Heart left ventricle (tissue), 16 donors: ENCODE measurements at regions of chr6 and their contacts with region 1.

Region 1: DNA sequence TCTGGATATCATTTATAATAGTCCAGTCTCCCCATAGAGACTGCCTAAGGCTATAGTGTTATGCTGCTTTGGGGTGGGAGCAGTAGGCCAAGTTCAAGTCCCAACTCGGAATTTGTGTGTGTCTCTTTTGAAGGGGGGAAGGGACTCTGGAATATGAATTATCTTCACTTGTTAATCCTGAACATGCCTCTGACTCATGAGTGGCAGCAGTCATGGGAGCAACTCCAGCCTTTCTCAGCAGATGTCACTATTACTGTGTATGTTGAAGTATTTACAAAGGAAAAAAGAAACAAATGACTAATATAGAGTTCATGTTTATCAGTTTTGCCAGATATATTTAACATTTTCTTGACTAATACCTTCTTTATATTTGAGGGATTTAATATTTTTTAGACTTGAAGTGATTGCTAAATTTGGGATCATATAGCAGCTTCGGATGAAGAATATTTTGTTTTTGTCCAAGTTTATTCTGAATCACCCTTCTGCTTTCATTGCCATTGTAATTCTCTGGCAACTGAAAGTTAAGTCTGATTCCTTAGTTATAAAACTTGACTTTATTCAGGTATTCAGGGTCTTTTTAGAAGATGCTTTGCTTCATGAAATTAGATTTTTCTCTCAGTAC is 23.4 kb downstream of the FAM217A start:
- DNase-seq: peak in 2 of 5 donors; percentile 35 to 38
- ATAC-seq: peak; percentile 80 to 91 (median 87)
- H3K4me3 ChIP-seq: no peak overlapping the region
- H3K27ac ChIP-seq: peak overlapping the region in 7 of 12 donors; percentile 0 to 35 (median 11)
- H3K4me1 ChIP-seq: peaks cover 0 to 13% (median 6%) of the 10 kb centered on the region in 12 donors
- H3K27me3 ChIP-seq: no peaks in the 10 kb centered on the region
- CTCF ChIP-seq: peak in 11 of 12 donors; percentile 23 to 70 (median 52)
- POLR2A ChIP-seq: no peak

Region 2: GRCh38 chr6:4078691-4079471 is 23.4 kb after region 1 on chr6 and contains the start of gene FAM217A:
- intact Hi-C with region 1: no loop called
- DNase-seq: no peak
- ATAC-seq: no peak
- H3K4me3 ChIP-seq: peak within 1 kb of the TSS in 2 of 12 donors; percentile 2 to 9
- H3K27ac ChIP-seq: no peak within 1 kb of the TSS
- H3K4me1 ChIP-seq: no peaks in the 10 kb centered on the region
- H3K27me3 ChIP-seq: peaks cover 0 to 16% (median 8%) of the 10 kb centered on the region in 9 donors
- CTCF ChIP-seq: no peak
- POLR2A ChIP-seq: no peak
- total RNA-seq, gene FAM217A: not detected

Region 3: GRCh38 chr6:4115746-4116145 is 60.2 kb after region 1 on chr6:
- intact Hi-C with region 1: loop called in 3 of 10 experiments (anchors 5 to 10 kb)
- DNase-seq: no peak
- ATAC-seq: no peak
- H3K4me3 ChIP-seq: no peak overlapping the region
- H3K27ac ChIP-seq: no peak overlapping the region
- H3K4me1 ChIP-seq: peaks cover 0 to 2% (median 0%) of the 10 kb centered on the region in 12 donors
- H3K27me3 ChIP-seq: no peaks in the 10 kb centered on the region
- CTCF ChIP-seq: no peak
- POLR2A ChIP-seq: no peak

Region 4: DNA sequence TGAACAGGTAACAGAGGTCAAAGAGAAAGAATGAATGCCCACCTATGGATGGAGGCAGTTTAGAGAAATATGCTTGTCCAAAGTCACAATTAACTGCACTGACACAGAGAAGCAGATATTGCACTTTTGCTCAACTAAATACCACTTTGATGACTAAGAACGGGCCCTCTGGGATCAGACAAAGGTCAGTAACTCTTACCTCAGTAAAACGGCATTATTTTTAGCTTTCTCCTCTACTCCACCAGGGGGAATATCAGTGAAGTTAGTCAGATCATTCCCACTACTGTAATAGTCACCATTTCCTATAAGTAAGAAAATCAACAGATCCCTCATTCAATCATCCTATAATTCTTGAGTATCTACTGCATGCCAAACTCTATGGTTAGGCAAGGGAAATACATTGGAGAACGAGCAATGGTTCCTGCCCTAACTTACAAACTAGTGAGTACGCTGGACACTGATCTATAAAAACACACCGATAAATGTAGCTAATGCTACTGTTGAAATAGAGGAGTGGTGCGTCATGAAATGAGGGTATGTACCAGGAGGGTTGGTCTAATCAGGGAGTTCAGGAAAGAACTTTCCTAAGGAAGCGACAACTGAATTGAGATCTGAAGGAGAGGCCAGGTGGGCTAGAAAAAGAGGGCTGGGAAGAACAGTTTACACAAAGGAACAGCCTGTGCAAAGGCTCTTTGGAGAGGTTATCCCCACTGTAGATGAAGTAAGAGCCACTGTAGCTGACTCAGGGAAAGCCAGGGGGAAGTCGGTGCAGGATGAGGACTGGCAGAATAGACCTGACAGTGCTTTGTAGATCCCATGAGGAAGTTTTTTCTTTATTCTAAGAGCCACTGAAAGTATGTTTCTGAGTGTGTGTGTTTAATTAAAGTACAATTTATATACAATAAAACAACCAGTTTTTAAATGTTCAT is 70.7 kb after region 1 on chr6:
- intact Hi-C with region 1: loop called in 3 of 10 experiments (anchors 5 to 10 kb)
- DNase-seq: no peak
- ATAC-seq: peak in 3 of 4 donors; percentile 44 to 91 (median 77)
- H3K4me3 ChIP-seq: no peak overlapping the region
- H3K27ac ChIP-seq: peak overlapping the region in 2 of 12 donors; percentile 30 to 34
- H3K4me1 ChIP-seq: peaks cover 0 to 7% (median 0%) of the 10 kb centered on the region in 12 donors
- H3K27me3 ChIP-seq: no peaks in the 10 kb centered on the region
- CTCF ChIP-seq: peak in 3 of 12 donors; percentile 5 to 27 (median 20)
- POLR2A ChIP-seq: no peak

Region 5: DNA sequence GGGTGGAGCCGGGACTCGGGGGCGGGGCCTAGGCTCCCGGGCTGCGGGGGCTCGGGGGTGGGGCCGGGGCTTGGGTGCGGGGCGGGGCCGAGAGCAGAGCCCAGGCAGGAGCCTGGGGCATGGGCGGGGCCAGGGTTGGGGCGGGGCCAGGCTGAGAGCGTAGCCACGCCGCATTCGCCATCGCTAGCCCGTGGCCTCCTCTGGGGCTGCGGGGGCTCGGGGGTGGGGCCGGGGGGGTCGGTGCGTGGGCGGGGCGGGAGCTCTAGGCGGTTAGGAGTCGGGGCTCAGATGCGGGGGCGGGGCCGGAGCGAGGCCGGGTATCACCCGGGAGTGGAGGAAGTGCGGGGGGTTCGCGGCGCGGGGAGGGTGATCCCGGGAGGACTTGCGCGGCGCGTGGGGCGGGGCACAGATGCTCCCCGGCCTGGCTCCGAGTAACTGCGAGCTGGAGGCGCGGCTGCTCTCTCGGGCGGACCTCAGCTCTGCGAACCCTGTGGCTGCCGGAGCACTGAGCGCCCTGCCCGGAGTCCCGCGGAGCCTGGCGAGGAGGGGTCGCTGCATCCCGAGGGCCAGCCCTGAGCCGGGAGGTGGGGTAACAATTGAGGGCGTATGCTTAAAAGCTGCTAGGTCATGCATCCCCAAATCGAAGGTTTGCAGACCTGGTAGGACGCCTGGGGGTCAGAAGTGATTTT is 80.3 kb after region 1 on chr6:
- intact Hi-C with region 1: loop called in 2 of 10 experiments (anchors 5 kb)
- DNase-seq: peak; percentile 98 to 99 (median 99)
- ATAC-seq: peak; percentile 94 to 98 (median 96)
- H3K4me3 ChIP-seq: peak overlapping the region; percentile 46 to 97 (median 78)
- H3K27ac ChIP-seq: peak overlapping the region; percentile 13 to 96 (median 88)
- H3K4me1 ChIP-seq: peaks cover 0 to 31% (median 17%) of the 10 kb centered on the region in 12 donors
- H3K27me3 ChIP-seq: no peaks in the 10 kb centered on the region
- CTCF ChIP-seq: no peak
- POLR2A ChIP-seq: peak in 1 of 2 donors; percentile 65

Region 6: GRCh38 chr6:4155848-4156466 is 100.4 kb after region 1 on chr6:
- intact Hi-C with region 1: loop called (anchors 1 to 10 kb)
- DNase-seq: peak in 4 of 5 donors; percentile 76 to 79 (median 76)
- ATAC-seq: peak; percentile 61 to 93 (median 88)
- H3K4me3 ChIP-seq: peak overlapping the region in 1 of 12 donors; percentile 5
- H3K27ac ChIP-seq: no peak overlapping the region
- H3K4me1 ChIP-seq: peaks cover 0 to 6% (median 0%) of the 10 kb centered on the region in 12 donors
- H3K27me3 ChIP-seq: no peaks in the 10 kb centered on the region
- CTCF ChIP-seq: peak; percentile 81 to 93 (median 84)
- POLR2A ChIP-seq: no peak

Region 7: GRCh38 chr6:4210629-4211423 is 155.3 kb after region 1 on chr6:
- intact Hi-C with region 1: loop called in 4 of 10 experiments (anchors 2 to 10 kb)
- DNase-seq: peak; percentile 27 to 56 (median 52)
- ATAC-seq: peak in 3 of 4 donors; percentile 68 to 80 (median 70)
- H3K4me3 ChIP-seq: no peak overlapping the region
- H3K27ac ChIP-seq: no peak overlapping the region
- H3K4me1 ChIP-seq: peaks cover 0 to 29% (median 9%) of the 10 kb centered on the region in 12 donors
- H3K27me3 ChIP-seq: no peaks in the 10 kb centered on the region
- CTCF ChIP-seq: peak; percentile 55 to 78 (median 70)
- POLR2A ChIP-seq: no peak